ENCODE measurements at regions of chr1 and their contacts with region 1.

Region 1: DNA sequence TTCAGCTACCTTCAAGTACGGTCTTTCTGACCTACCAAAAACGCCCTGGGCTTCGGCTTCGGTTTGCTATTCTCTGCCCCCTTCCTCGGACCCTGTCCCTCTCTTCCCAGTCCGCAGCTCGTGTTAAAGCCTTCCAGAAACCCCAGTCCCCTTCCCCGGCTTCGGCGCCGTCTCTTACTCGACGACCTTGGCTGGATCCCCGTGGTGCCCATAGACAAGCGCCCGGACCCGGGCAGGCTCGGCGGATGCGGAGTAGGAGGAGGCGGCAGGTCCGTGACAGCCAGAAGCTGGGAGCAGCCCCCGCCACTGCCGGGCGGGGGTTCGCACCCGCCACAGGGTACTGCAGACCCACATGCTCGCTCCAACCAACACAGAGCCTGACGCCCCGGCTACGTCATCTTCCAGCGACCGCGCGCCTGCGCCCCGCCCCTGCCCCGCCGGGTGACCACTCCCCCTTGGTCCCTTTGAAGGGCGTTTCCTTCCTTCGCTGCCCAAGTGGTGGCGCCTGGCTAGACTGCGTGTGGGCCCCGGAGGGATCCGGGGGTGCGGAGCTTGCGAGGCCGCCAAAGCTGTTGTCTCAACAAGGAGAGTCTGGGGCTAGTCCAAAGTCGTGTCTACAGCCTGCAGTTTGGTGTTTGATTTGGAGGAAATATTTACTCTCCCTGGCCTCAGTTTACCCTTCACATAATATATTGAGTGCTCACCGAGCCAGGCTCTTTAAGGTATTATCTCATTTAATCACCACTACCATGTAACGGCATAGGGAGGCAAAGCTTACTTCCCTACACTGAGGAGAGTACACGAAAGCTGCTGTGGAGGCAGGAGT is at the start of gene MECR:
- DNase-seq: peak; percentile 97
- H3K4me3 Mint-ChIP-seq: peak within 1 kb of the TSS; percentile 95
- H3K27ac Mint-ChIP-seq: peak within 1 kb of the TSS; percentile 83
- H3K4me1 Mint-ChIP-seq: peaks cover 27% of the 10 kb centered on the region
- H3K27me3 Mint-ChIP-seq: peaks cover 21% of the 10 kb centered on the region
- CTCF ChIP-seq: peak; percentile 19
- total RNA-seq, gene MECR: 45.9 and 46.8 TPM in 2 replicates

Region 2: GRCh38 chr1:29711582-29712283 is 481.0 kb after region 1 on chr1:
- CTCF ChIA-PET with region 1: no interaction called
- intact Hi-C with region 1: loop called (anchors 10 kb)
- DNase-seq: no peak
- H3K4me3 Mint-ChIP-seq: no peak overlapping the region
- H3K27ac Mint-ChIP-seq: no peak overlapping the region
- H3K4me1 Mint-ChIP-seq: peaks cover 41% of the 10 kb centered on the region
- H3K27me3 Mint-ChIP-seq: peaks cover 9% of the 10 kb centered on the region
- CTCF ChIP-seq: no peak

Measured in Calu3 (cell line).